ENCODE measurements at regions of chr5 and their contacts with region 1.

Region 1: DNA sequence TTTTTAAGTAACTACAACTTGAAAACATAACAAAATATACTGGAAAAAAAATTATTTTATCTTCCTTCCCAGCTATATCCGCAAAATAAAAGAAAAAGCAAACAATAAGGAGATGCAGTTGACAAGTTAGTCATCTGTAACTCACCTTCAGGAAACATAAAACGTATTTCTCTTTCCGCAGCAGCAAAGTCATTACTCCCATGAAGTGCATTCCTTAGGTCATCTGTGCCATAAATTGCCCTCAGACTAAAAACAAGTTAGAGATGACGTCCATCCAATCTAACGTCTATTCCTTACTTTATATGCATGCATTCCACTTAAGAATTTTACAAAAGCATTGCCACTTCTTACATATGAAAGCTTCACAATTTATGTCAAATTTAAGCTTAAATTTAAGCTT is 10.9 kb downstream of the NME5 start:
- DNase-seq: peak; percentile 65
- ATAC-seq: peak; percentile 83
- H3K4me3 ChIP-seq: no peak overlapping the region
- H3K27ac ChIP-seq: peak overlapping the region; percentile 77
- H3K4me1 ChIP-seq: peaks cover 16% of the 10 kb centered on the region; the same call in 1 of the 2 replicates
- H3K27me3 ChIP-seq: no peaks in the 10 kb centered on the region
- CTCF ChIP-seq: no peak

Region 2: GRCh38 chr5:137594717-137595116 is 533.6 kb before region 1 on chr5:
- CTCF ChIA-PET with region 1: no interaction called
- POLR2A ChIA-PET with region 1: no interaction called
- intact Hi-C with region 1: no loop called
- DNase-seq: no peak
- ATAC-seq: no peak
- H3K4me3 ChIP-seq: no peak overlapping the region
- H3K27ac ChIP-seq: no peak overlapping the region
- H3K4me1 ChIP-seq: no peaks in the 10 kb centered on the region
- H3K27me3 ChIP-seq: peaks cover 25% of the 10 kb centered on the region
- CTCF ChIP-seq: no peak

Region 3: DNA sequence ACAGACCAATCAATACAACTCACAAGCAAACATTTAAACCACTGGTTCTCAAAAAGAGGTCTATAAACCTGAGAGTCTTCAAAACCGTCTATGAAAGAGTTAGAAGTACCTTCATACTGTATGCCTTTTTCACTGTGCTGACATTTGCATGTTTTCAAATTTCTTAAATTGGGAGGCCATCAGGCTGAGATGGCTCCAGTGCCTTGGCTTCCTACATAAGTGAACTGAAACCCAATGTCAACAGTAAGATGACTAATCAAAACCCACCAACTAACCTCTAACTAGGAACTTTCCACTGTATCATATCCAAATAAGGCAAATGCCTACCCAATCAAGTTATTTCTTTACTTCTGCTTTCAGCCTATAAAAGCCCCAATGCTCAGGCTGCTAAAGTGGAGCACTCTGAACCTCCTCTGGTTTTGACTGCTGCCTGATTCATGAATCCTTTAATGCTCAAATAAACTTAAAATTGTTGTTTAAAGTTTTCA is 130.6 kb before region 1 on chr5:
- CTCF ChIA-PET with region 1: no interaction called
- POLR2A ChIA-PET with region 1: no interaction called
- intact Hi-C with region 1: no loop called
- DNase-seq: peak; percentile 45
- ATAC-seq: peak; percentile 47
- H3K4me3 ChIP-seq: no peak overlapping the region
- H3K27ac ChIP-seq: 0 out of 2 replicates have a peak overlapping the region, but pooled peaks have one; percentile 6
- H3K4me1 ChIP-seq: peaks cover 16% of the 10 kb centered on the region; the same call in 1 of the 2 replicates
- H3K27me3 ChIP-seq: no peaks in the 10 kb centered on the region
- CTCF ChIP-seq: no peak

Region 4: DNA sequence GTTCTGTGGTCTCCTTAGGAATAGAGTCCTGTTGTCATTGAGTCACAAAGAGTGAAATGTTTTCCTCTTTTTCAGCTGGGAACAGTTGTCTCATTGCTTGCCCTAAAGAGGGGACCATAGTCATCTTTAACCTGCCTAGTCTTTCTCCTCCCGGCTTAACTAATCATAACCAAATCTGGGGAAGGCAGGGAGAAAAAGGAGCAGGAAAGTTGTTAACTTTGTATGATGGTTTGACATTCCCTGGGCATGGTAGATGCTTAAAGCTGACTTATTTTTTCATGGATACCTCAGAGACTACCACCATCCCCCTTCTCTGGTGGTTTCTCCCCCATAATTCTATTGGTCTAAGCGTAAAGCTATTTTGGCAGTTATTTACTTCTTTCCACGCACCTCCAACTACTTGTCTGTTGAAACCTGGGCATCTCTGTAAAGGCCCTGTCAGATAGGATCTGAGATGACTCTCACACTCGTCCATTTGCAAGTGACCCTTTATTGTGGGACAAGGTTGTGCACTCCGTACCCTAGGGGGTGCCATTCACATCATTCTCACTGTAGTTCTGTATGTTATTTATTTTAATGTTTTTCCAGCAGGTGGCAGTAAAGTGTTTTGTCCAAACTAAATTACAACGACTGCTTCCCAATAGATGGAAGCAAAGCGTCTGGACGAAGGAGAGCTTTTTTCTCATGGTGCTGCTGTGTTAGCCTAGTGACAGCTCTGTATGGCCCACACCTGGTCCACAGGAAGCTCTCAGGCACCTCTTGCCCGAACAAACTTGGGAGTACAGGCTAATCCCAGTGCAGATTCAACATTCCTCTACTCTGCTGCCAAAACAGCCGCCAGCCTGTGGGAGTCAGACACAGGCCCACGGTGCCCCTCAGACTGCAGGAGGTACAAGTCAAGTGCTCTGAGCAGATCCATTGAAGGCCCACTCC is 92.5 kb before region 1 on chr5:
- CTCF ChIA-PET with region 1: interaction called, 3 read pairs
- POLR2A ChIA-PET with region 1: no interaction called
- intact Hi-C with region 1: loop called (anchors 5 kb)
- DNase-seq: peak; percentile 80
- ATAC-seq: peak; percentile 59
- H3K4me3 ChIP-seq: no peak overlapping the region
- H3K27ac ChIP-seq: no peak overlapping the region
- H3K4me1 ChIP-seq: peaks cover 8% of the 10 kb centered on the region
- H3K27me3 ChIP-seq: no peaks in the 10 kb centered on the region
- CTCF ChIP-seq: peak; percentile 95

Region 5: GRCh38 chr5:138077065-138077696 is 51.2 kb before region 1 on chr5:
- CTCF ChIA-PET with region 1: interaction called, 5 read pairs
- POLR2A ChIA-PET with region 1: no interaction called
- intact Hi-C with region 1: loop called (anchors 1 kb)
- DNase-seq: peak; percentile 72
- ATAC-seq: peak; percentile 73
- H3K4me3 ChIP-seq: no peak overlapping the region
- H3K27ac ChIP-seq: no peak overlapping the region
- H3K4me1 ChIP-seq: no peaks in the 10 kb centered on the region
- H3K27me3 ChIP-seq: no peaks in the 10 kb centered on the region
- CTCF ChIP-seq: peak; percentile 82

Region 6: GRCh38 chr5:138083702-138084101 is 44.6 kb before region 1 on chr5 and contains the start of gene WNT8A:
- CTCF ChIA-PET with region 1: interaction called, 12 read pairs
- POLR2A ChIA-PET with region 1: no interaction called
- intact Hi-C with region 1: no loop called
- DNase-seq: no peak
- ATAC-seq: no peak
- H3K4me3 ChIP-seq: no peak within 1 kb of the TSS
- H3K27ac ChIP-seq: no peak within 1 kb of the TSS
- H3K4me1 ChIP-seq: no peaks in the 10 kb centered on the region
- H3K27me3 ChIP-seq: no peaks in the 10 kb centered on the region
- CTCF ChIP-seq: no peak
- total RNA-seq, gene WNT8A: not detected in 2 replicates

Region 7: DNA sequence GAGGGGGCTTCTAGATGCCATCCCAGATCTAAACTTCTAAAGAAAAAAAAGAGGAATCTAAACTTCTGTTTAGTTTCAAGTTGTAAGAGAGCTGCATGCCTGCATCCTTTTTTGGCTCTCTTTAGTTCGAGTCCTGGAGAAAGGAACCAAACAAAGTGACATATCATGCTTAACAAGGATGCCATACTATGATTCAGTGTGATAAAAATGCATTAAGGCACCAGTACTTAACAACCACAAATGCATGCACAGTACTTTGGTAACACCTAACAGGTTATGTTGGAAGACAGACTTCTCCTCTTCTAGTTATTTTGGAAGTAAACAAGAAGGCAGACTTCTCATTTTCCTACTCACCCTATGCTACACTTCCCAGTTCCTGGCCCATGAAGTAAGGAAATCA is 16.4 kb before region 1 on chr5:
- CTCF ChIA-PET with region 1: no interaction called
- POLR2A ChIA-PET with region 1: no interaction called
- intact Hi-C with region 1: loop called (anchors 2 kb)
- DNase-seq: peak; percentile 55
- ATAC-seq: peak; percentile 79
- H3K4me3 ChIP-seq: no peak overlapping the region
- H3K27ac ChIP-seq: no peak overlapping the region
- H3K4me1 ChIP-seq: peaks cover 16% of the 10 kb centered on the region; the same call in 1 of the 2 replicates
- H3K27me3 ChIP-seq: no peaks in the 10 kb centered on the region
- CTCF ChIP-seq: no peak

Region 8: GRCh38 chr5:138610918-138611677 is 482.8 kb after region 1 on chr5:
- CTCF ChIA-PET with region 1: no interaction called
- POLR2A ChIA-PET with region 1: no interaction called
- intact Hi-C with region 1: no loop called
- DNase-seq: no peak
- ATAC-seq: no peak
- H3K4me3 ChIP-seq: no peak overlapping the region
- H3K27ac ChIP-seq: no peak overlapping the region
- H3K4me1 ChIP-seq: peaks cover 13% of the 10 kb centered on the region
- H3K27me3 ChIP-seq: no peaks in the 10 kb centered on the region
- CTCF ChIP-seq: no peak

Measured in PC-3 (cell line).